Transverse colon (tissue), 4 donors: ENCODE measurements at regions of chr2 and their contacts with region 1.

Region 1: GRCh38 chr2:197310271-197310985 is at the start of gene ANKRD44:
- DNase-seq: peak; percentile 90
- H3K4me3 ChIP-seq: peak within 1 kb of the TSS; percentile 71 to 83 (median 76)
- H3K27ac ChIP-seq: peak within 1 kb of the TSS; percentile 82 to 90 (median 88)
- H3K4me1 ChIP-seq: peaks cover 9 to 21% (median 15%) of the 10 kb centered on the region in 4 donors
- H3K27me3 ChIP-seq: no peaks in the 10 kb centered on the region
- CTCF ChIP-seq: peak; percentile 30 to 68 (median 48)
- EP300 ChIP-seq: no peak
- POLR2A ChIP-seq: peak; percentile 65
- total RNA-seq, gene ANKRD44: 13.9 to 46.8 (median 27.5) TPM

Region 2: GRCh38 chr2:197184959-197185586 is 125.4 kb before region 1 on chr2:
- in situ Hi-C with region 1: loop called (anchors 5 to 25 kb)
- intact Hi-C with region 1: no loop called
- DNase-seq: no peak
- H3K4me3 ChIP-seq: no peak overlapping the region
- H3K27ac ChIP-seq: no peak overlapping the region
- H3K4me1 ChIP-seq: peaks cover 0 to 5% (median 1%) of the 10 kb centered on the region in 4 donors
- H3K27me3 ChIP-seq: no peaks in the 10 kb centered on the region
- CTCF ChIP-seq: no peak
- EP300 ChIP-seq: no peak
- POLR2A ChIP-seq: no peak

Region 3: GRCh38 chr2:197191177-197191939 is 119.1 kb before region 1 on chr2:
- in situ Hi-C with region 1: loop called (anchors 5 to 25 kb)
- intact Hi-C with region 1: no loop called
- DNase-seq: no peak
- H3K4me3 ChIP-seq: no peak overlapping the region
- H3K27ac ChIP-seq: no peak overlapping the region
- H3K4me1 ChIP-seq: peaks cover 0 to 21% (median 3%) of the 10 kb centered on the region in 4 donors
- H3K27me3 ChIP-seq: no peaks in the 10 kb centered on the region
- CTCF ChIP-seq: peak; percentile 71 to 91 (median 74)
- EP300 ChIP-seq: no peak
- POLR2A ChIP-seq: no peak